Calu3 (cell line): ENCODE measurements at regions of chr3 and their contacts with region 1.

Region 1: DNA sequence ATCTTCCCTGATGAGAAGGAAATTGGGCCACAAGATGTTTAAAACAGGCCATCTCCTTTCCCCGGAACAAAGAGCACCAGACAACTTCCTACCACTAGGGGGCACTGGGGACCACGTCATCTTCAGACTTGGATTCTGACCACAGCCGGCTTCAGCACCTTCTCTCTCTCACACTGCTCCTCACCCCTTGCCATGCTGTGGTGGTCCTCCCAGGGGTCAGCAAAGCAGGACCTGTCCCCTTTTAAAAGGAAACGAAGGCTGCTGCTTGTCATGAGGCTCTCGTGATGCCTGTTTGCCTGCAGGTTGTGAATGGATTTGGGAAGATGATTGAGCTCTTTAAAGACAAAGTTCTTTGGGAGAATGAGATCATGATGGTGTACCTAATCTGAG is 16.2 kb downstream of the RFT1 start:
- DNase-seq: peak; percentile 85
- H3K4me3 Mint-ChIP-seq: no peak overlapping the region
- H3K27ac Mint-ChIP-seq: no peak overlapping the region
- H3K4me1 Mint-ChIP-seq: no peaks in the 10 kb centered on the region
- H3K27me3 Mint-ChIP-seq: no peaks in the 10 kb centered on the region
- CTCF ChIP-seq: peak; percentile 74

Region 2: DNA sequence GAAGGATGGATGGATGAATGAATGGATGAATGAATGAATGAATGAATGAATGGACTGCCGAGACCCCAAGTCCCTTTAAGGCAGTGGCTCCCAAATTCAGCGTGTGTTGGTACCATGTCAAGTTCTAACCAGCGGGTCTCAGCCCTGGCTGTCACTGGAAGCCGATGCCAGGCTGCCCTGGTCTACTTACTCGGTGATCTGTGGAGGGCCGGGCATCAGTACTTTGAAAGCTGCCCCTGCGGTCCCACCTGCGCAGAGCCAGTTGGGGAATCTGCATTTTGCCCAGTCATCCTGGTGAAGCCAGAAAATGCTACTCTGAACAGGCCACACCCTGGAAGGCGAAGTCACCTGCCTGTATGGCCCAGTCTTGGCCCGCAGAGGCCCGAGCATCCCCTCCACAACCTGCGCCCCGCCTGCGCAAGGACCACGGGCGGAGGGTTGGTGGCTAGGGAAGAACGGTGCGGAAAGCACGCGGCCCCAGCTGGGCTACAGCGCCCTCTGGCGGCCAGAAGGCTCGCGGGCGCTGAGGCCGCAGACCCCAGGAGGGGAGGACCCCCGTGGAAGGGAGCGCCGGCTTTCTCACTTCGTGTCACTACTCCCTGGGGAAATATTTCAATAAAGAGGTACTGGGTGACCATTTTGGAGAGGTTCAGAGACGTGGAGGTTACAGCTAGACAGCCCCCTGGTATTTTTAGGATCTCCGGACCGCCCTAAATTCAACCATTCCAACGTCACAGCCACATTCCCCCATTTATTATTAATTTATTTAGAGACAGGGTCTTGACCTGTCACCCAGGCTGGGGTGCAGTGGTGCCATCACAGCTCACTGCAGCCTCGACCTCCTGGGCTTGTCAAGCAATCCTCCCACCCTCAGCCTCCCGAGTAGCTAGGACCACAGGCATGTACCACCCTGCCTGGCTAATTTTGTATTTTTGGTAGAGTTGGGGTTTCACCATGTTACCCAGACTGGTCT is 81.9 kb after region 1 on chr3:
- CTCF ChIA-PET with region 1: interaction called, 16 read pairs
- intact Hi-C with region 1: loop called (anchors 1 kb)
- DNase-seq: peak; percentile 55
- H3K4me3 Mint-ChIP-seq: no peak overlapping the region
- H3K27ac Mint-ChIP-seq: no peak overlapping the region
- H3K4me1 Mint-ChIP-seq: peaks cover 7% of the 10 kb centered on the region
- H3K27me3 Mint-ChIP-seq: no peaks in the 10 kb centered on the region
- CTCF ChIP-seq: peak; percentile 95